B cell (primary cell): ENCODE measurements at regions of chr6 and their contacts with region 1.

Region 1: GRCh38 chr6:24861934-24862333 is 63.2 kb upstream of the ARMH2 start:
- DNase-seq: peak; percentile 67
- ATAC-seq: peak; percentile 46
- H3K4me3 ChIP-seq: peak overlapping the region in 2 of 5 experiments; percentile 4 to 8
- H3K4me3 Mint-ChIP-seq: peak overlapping the region; percentile 53
- H3K27ac ChIP-seq: peak overlapping the region; percentile 81 to 88
- H3K27ac Mint-ChIP-seq: peak overlapping the region; percentile 87
- H3K4me1 ChIP-seq: peaks cover 84 to 88% of the 10 kb centered on the region in 2 donors
- H3K4me1 Mint-ChIP-seq: peaks cover 90% of the 10 kb centered on the region
- H3K27me3 ChIP-seq: no peaks in the 10 kb centered on the region
- H3K27me3 Mint-ChIP-seq: no peaks in the 10 kb centered on the region
- CTCF ChIP-seq: no peak

Region 2: DNA sequence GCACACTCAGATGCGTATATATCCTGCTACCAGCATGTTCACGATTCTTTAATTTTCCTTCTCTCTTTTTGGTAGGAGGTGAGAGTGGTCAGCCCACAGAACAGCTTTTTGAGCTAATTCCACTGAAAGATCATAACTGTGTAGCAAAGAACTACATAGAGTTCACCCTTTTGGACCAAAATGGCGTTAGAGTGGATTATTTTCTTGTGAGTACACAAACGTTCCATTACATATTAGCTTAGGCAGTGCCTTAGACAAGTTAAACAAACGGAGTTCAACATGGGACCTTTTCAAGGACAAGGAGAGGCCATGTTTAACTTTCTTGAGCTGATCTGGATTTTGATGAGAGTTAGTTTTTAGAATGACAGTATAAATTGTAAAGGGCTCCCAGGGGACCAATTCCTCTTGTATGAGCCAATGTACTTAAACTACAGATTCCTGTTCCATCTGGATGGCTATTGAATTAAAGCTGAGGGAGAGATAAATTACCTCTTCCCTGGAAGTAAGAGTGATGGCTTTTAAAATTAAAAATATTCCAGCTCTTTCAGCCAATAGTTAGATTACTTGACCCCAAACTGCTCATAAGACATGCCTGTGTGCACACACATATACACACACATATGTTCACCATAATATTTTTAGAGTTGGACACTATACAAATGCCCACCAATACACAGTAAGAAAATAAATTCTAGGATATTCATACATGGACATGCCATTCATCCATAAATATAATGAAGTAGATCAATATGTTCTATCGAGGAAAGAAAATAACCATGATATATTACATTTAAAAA is 37.6 kb before region 1 on chr6:
- CTCF ChIA-PET with region 1: no interaction called
- POLR2A ChIA-PET with region 1: no interaction called
- intact Hi-C with region 1: no loop called
- DNase-seq: no peak
- ATAC-seq: no peak
- H3K4me3 ChIP-seq: no peak overlapping the region
- H3K4me3 Mint-ChIP-seq: no peak overlapping the region
- H3K27ac ChIP-seq: peak overlapping the region in 1 of 2 donors; percentile 52
- H3K27ac Mint-ChIP-seq: peak overlapping the region; percentile 13
- H3K4me1 ChIP-seq: no peaks in the 10 kb centered on the region
- H3K4me1 Mint-ChIP-seq: peaks cover 2% of the 10 kb centered on the region
- H3K27me3 ChIP-seq: no peaks in the 10 kb centered on the region
- H3K27me3 Mint-ChIP-seq: no peaks in the 10 kb centered on the region
- CTCF ChIP-seq: no peak

Region 3: DNA sequence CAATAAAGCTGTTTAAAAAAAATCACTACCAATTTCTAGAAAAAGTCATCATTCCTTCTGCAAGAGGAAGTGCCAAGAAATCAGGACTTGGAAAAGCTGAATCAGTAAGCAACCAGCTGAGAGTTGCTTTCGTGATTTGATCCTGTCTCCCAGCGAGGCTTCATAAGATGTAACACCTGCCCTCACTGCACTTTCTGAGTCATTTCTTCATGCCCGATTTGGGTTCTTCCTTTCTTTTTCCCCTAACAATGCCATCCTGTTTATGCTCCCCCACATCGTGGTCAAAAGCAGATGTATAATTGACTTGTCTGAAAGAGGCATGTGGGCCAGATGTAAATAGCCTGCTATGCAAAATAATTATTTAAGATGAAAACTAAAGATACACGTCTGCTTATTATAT is 21.7 kb after region 1 on chr6:
- CTCF ChIA-PET with region 1: interaction called, 7 read pairs
- POLR2A ChIA-PET with region 1: no interaction called
- intact Hi-C with region 1: loop called (anchors 2 kb)
- DNase-seq: peak; percentile 27
- ATAC-seq: no peak
- H3K4me3 ChIP-seq: no peak overlapping the region
- H3K4me3 Mint-ChIP-seq: peak overlapping the region; percentile 76
- H3K27ac ChIP-seq: peak overlapping the region; percentile 26 to 84
- H3K27ac Mint-ChIP-seq: peak overlapping the region; percentile 87
- H3K4me1 ChIP-seq: peaks cover 69 to 74% of the 10 kb centered on the region in 2 donors
- H3K4me1 Mint-ChIP-seq: peaks cover 87% of the 10 kb centered on the region
- H3K27me3 ChIP-seq: no peaks in the 10 kb centered on the region
- H3K27me3 Mint-ChIP-seq: no peaks in the 10 kb centered on the region
- CTCF ChIP-seq: no peak

Region 4: GRCh38 chr6:24968786-24969185 is 106.9 kb after region 1 on chr6:
- CTCF ChIA-PET with region 1: no interaction called
- POLR2A ChIA-PET with region 1: no interaction called
- intact Hi-C with region 1: no loop called
- DNase-seq: no peak
- ATAC-seq: no peak
- H3K4me3 ChIP-seq: no peak overlapping the region
- H3K4me3 Mint-ChIP-seq: no peak overlapping the region
- H3K27ac ChIP-seq: no peak overlapping the region
- H3K27ac Mint-ChIP-seq: peak overlapping the region; percentile 7
- H3K4me1 ChIP-seq: peaks cover 34 to 44% of the 10 kb centered on the region in 2 donors
- H3K4me1 Mint-ChIP-seq: peaks cover 82% of the 10 kb centered on the region
- H3K27me3 ChIP-seq: no peaks in the 10 kb centered on the region
- H3K27me3 Mint-ChIP-seq: no peaks in the 10 kb centered on the region
- CTCF ChIP-seq: no peak

Region 5: DNA sequence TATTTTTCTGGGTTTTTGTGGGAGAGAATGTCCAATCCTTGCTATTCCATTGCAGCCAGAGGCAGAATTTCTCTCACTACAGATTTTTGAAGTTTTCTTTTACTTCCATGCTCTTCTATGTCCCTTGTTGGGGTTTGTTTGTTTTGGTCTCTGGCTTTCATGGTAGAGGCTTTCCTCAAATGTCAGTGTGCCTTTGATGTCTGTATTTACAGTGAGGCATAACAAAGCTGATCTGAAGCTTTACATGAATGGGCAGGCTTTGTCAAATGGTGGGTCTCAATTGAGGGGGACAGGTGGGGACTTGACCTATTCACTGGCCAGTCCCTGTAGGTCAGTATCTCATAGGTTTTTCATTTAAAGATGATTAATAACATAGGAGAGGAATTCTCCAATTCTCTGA is 408.6 kb after region 1 on chr6:
- CTCF ChIA-PET with region 1: no interaction called
- POLR2A ChIA-PET with region 1: no interaction called
- intact Hi-C with region 1: no loop called
- DNase-seq: no peak
- ATAC-seq: no peak
- H3K4me3 ChIP-seq: no peak overlapping the region
- H3K4me3 Mint-ChIP-seq: no peak overlapping the region
- H3K27ac ChIP-seq: no peak overlapping the region
- H3K27ac Mint-ChIP-seq: no peak overlapping the region
- H3K4me1 ChIP-seq: no peaks in the 10 kb centered on the region
- H3K4me1 Mint-ChIP-seq: peaks cover under 1% of the 10 kb centered on the region
- H3K27me3 ChIP-seq: peaks cover 0 to 7% (median 0%) of the 10 kb centered on the region in 4 experiments
- H3K27me3 Mint-ChIP-seq: peaks cover 28% of the 10 kb centered on the region
- CTCF ChIP-seq: no peak